Spleen (tissue), 13 donors: ENCODE measurements at regions of chr6 and their contacts with region 1.

Region 1: DNA sequence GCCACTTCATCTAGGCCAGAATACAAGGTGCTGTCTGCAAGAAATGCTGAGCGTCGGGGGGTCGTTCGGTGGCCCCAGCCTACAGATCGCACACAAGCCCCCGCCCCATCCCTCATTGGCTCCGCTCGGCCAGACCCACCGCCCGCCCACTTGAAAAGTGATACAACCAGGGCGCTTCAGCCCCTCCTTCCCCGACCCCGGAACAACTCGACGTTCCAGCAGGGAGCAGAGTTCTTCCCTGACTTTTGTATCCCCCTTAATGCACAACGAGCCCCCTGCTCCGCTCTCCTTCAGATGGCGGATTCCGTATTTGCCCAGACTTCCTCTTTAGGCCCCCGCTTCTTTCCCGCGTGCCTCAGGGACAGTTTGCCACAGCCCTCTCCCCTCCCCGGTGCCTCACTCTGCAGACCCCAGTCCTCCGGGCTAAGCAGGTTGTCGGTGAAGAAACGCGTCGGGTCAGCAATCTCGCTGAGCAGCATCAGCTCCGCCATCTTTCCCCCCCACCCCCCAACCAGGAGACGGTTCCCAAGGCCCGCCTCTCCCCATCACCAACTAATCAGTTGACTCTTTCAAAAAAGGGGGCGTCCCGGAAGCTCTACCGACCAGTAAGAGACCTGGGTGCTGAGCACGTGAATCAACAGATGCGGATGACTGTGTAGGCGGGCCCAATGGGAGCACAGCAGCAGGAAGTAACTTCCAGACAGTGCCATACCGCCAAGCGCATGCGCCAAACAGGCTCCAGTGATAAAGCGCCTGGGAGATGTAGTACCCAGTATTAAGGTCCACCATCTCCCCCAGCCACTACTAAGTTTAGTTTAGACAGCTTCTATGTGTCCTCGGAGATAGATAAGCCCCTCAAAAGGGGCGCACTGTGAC is at the start of gene ATF6B:
- DNase-seq: peak; percentile 98
- H3K4me3 ChIP-seq: peak within 1 kb of the TSS; percentile 78 to 97 (median 93)
- H3K27ac ChIP-seq: peak within 1 kb of the TSS; percentile 49 to 95 (median 90)
- H3K4me1 ChIP-seq: peaks cover 23 to 72% (median 45%) of the 10 kb centered on the region in 6 donors
- H3K27me3 ChIP-seq: no peaks in the 10 kb centered on the region
- CTCF ChIP-seq: peak in 2 of 11 experiments; percentile 9 to 16
- POLR2A ChIP-seq: peak in 1 of 3 donors; percentile 29
- total RNA-seq, gene ATF6B: 79.1 to 126 (median 101) TPM

Region 2: GRCh38 chr6:32195652-32195901 is 67.6 kb after region 1 on chr6:
- intact Hi-C with region 1: loop called (anchors 10 kb)
- DNase-seq: peak; percentile 100
- H3K4me3 ChIP-seq: peak overlapping the region in 7 of 8 donors; percentile 57 to 89 (median 67)
- H3K27ac ChIP-seq: peak overlapping the region; percentile 98 to 100 (median 100)
- H3K4me1 ChIP-seq: peaks cover 39 to 64% (median 61%) of the 10 kb centered on the region in 6 donors
- H3K27me3 ChIP-seq: no peaks in the 10 kb centered on the region
- CTCF ChIP-seq: peak; percentile 80 to 97 (median 90)
- POLR2A ChIP-seq: no peak

Region 3: GRCh38 chr6:32369675-32370074 is 241.7 kb after region 1 on chr6:
- intact Hi-C with region 1: no loop called
- DNase-seq: no peak
- H3K4me3 ChIP-seq: no peak overlapping the region
- H3K27ac ChIP-seq: no peak overlapping the region
- H3K4me1 ChIP-seq: no peaks in the 10 kb centered on the region
- H3K27me3 ChIP-seq: no peaks in the 10 kb centered on the region
- CTCF ChIP-seq: no peak
- POLR2A ChIP-seq: no peak